BJ (cell line): ENCODE measurements at regions of chr5 and their contacts with region 1.

Region 1: GRCh38 chr5:34486160-34486848 is 169.8 kb upstream of the RAI14 start:
- DNase-seq: no peak
- H3K4me3 ChIP-seq: no peak overlapping the region
- H3K27me3 ChIP-seq: no peaks in the 10 kb centered on the region
- CTCF ChIP-seq: peak; percentile 82

Region 2: GRCh38 chr5:34474573-34475021 is 11.7 kb before region 1 on chr5:
- CTCF ChIA-PET with region 1: interaction called, 27 read pairs
- POLR2A ChIA-PET with region 1: no interaction called
- DNase-seq: no peak
- H3K4me3 ChIP-seq: no peak overlapping the region
- H3K27me3 ChIP-seq: peaks cover 2% of the 10 kb centered on the region; the same call in 1 of the 2 replicates
- CTCF ChIP-seq: peak; percentile 94

Region 3: DNA sequence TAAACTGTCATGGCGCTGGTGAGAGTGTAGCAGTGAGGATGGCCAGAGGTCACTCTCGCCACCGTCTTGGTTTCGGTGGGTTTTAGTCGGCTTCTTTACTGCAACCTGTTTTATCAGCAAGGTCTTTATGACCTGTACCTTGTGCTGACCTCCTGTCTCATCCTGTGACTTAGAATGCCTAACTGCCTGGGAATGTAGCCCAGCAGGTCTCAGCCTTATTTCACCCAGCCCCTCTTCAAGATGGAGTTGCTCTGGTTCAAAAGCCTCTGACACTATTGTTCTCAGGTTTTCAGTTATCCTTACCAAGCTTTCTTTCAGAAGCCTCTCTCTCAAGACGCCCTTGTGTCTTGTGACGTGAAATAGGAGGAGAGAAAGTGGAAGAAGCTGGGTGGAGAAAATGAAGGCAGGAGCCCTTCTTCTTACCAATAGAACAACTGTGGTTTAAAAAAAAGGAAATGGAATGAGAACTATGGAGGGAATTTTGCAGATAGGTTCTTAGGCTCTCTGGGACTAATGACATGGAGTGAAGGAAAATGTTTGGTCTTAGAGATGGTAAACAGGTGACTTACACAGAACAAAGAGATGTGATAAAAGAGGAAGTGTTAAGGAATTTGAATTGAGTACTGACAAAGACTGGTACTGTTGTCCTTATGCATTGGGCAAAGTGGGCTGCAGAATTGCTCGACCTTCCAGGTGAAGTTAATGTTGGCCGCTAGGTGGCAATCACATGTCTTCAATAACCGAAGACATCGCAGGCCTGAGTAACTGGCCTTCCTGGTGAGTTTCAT is 36.5 kb after region 1 on chr5:
- CTCF ChIA-PET with region 1: interaction called, 33 read pairs
- POLR2A ChIA-PET with region 1: no interaction called
- DNase-seq: no peak
- H3K4me3 ChIP-seq: no peak overlapping the region
- H3K27me3 ChIP-seq: no peaks in the 10 kb centered on the region
- CTCF ChIP-seq: peak; percentile 66

Region 4: GRCh38 chr5:34551911-34552433 is 65.7 kb after region 1 on chr5:
- CTCF ChIA-PET with region 1: no interaction called
- POLR2A ChIA-PET with region 1: no interaction called
- DNase-seq: no peak
- H3K4me3 ChIP-seq: no peak overlapping the region
- H3K27me3 ChIP-seq: no peaks in the 10 kb centered on the region
- CTCF ChIP-seq: no peak

Region 5: GRCh38 chr5:34898258-34898895 is 412.1 kb after region 1 on chr5:
- CTCF ChIA-PET with region 1: interaction called, 67 read pairs
- POLR2A ChIA-PET with region 1: no interaction called
- DNase-seq: peak; percentile 7
- H3K4me3 ChIP-seq: no peak overlapping the region
- H3K27me3 ChIP-seq: no peaks in the 10 kb centered on the region
- CTCF ChIP-seq: peak; percentile 87

Region 6: DNA sequence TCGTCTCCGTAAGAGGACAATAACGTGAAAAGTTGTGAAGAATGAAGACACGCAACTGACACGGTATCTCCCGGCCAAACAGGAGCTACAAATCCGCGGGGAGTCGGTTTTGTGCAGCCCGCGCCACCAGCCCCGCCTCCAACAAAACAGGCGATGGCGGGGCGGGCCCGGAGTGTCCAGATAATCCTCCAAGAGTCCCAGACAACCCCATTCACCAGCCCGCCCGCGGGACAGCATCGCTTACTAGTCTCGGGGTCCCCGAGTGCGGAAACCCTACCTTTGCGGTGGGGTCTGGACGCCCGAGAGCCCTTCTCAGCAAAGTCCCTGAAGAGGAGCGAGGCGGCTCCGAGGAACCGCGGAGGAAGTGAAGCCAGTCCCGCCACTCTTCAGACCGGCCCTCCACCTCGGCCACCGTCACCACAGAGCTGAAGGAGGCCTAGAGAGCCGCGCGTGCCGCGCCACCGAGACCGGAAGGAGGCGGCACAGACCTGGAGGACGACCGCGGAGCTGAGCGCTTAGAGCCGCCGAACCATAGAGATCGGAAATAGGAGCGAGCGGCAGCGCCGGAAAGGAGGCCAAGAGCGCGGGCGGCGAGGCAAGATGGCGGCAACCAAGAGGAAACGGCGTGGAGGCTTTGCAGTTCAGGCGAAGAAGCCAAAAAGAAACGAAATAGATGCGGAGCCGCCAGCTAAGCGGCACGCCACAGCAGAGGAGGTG is 429.0 kb after region 1 on chr5 and contains the starts of genes BRIX1 and RAD1:
- CTCF ChIA-PET with region 1: interaction called, 17 read pairs
- POLR2A ChIA-PET with region 1: no interaction called
- DNase-seq: peak; percentile 82
- H3K4me3 ChIP-seq: peak within 1 kb of the TSS; percentile 61
- H3K27me3 ChIP-seq: no peaks in the 10 kb centered on the region
- CTCF ChIP-seq: peak; percentile 36; the same call in 1 of the 2 replicates
- polyA plus RNA-seq, gene BRIX1: 11.4 and 32.5 TPM in 2 replicates
- polyA plus RNA-seq, gene RAD1: 57.2 and 65.3 TPM in 2 replicates